Esophagus muscularis mucosa (tissue), 4 donors: ENCODE measurements at regions of chr17 and their contacts with region 1.

Region 1: DNA sequence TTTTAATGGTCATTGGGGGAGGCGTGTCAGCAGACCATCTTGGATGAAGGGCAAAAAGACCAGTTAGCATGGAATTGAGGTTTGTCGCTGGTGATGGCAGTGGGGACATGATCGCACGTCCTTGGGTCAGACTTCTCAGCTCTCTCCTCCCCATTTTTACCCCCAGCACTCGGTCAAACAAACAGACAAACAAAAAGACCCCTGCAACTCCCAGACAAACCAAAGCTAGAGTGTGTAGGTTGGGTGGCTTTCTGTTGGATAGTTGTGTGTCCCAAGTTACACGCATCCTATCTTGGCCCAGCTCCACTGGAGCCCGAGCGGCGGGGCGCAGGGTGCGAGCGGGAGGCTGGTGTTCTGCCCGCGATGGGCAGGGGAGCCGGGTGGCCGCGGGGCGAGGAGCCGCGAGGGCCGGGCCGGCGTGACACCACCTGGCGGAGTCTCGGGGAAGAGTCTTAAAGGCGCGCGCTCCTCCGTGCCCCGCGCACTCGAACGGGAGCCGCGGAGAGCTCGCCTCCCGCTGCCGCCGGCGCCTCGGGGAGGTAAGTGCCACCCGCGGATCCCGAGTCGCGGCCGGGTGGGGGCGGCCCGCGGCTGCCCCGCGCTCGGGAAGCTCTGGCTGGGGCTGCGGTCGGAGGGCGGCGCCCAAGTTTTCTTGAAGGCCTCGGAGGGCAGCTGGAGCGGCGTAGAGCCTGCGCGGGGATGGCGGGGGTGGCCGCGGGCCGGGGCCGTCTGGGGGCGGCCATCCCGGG is 18.5 kb upstream of the NTN1 start:
- DNase-seq: no peak
- H3K4me3 ChIP-seq: peak overlapping the region; percentile 69 to 79 (median 74)
- H3K27ac ChIP-seq: peak overlapping the region; percentile 68 to 79 (median 76)
- H3K4me1 ChIP-seq: peaks cover 14 to 45% (median 45%) of the 10 kb centered on the region in 4 donors
- H3K27me3 ChIP-seq: peaks cover 0 to 21% (median 1%) of the 10 kb centered on the region in 4 donors
- CTCF ChIP-seq: peak; percentile 40 to 70 (median 42)
- EP300 ChIP-seq: no peak
- POLR2A ChIP-seq: no peak

Region 2: DNA sequence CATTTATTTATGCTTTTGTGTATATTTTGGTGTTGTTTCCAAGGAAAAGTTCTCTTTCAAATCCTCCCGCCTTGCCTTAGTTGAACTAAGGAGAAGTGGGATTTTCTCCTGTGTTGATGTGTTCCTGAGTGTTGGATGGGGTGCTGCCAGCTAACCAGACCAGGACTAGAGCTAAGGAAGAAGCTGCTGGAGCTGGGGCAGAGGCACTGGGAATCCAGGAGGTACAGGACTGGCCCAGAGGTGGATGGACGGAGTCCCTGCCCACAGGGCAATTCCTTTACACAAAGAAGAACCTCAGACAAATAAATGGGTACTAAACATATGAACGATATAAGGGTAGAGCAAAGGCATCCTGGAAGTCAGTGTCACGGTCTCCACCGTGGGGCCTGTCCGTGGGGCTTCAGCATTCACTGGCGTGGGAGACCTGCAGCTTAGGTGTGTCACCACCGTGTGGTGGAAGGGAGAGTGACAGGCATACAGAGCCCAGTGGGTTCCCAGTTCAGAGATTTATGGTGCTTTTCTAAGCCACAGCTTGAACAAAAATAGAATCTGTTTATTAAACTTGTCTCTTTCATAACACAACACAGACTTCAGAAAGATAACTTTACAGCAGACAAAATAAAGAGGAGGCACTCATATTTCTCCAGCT is 289.3 kb after region 1 on chr17:
- intact Hi-C with region 1: loop called (anchors 5 kb)
- DNase-seq: no peak
- H3K4me3 ChIP-seq: no peak overlapping the region
- H3K27ac ChIP-seq: peak overlapping the region; percentile 76 to 80 (median 78)
- H3K4me1 ChIP-seq: peaks cover 11 to 51% (median 47%) of the 10 kb centered on the region in 4 donors
- H3K27me3 ChIP-seq: no peaks in the 10 kb centered on the region
- CTCF ChIP-seq: peak; percentile 82 to 88 (median 87)
- EP300 ChIP-seq: no peak
- POLR2A ChIP-seq: no peak